Cardiac septum (tissue), 1 donor: ENCODE measurements at regions of chr2 and their contacts with region 1.

Region 1: DNA sequence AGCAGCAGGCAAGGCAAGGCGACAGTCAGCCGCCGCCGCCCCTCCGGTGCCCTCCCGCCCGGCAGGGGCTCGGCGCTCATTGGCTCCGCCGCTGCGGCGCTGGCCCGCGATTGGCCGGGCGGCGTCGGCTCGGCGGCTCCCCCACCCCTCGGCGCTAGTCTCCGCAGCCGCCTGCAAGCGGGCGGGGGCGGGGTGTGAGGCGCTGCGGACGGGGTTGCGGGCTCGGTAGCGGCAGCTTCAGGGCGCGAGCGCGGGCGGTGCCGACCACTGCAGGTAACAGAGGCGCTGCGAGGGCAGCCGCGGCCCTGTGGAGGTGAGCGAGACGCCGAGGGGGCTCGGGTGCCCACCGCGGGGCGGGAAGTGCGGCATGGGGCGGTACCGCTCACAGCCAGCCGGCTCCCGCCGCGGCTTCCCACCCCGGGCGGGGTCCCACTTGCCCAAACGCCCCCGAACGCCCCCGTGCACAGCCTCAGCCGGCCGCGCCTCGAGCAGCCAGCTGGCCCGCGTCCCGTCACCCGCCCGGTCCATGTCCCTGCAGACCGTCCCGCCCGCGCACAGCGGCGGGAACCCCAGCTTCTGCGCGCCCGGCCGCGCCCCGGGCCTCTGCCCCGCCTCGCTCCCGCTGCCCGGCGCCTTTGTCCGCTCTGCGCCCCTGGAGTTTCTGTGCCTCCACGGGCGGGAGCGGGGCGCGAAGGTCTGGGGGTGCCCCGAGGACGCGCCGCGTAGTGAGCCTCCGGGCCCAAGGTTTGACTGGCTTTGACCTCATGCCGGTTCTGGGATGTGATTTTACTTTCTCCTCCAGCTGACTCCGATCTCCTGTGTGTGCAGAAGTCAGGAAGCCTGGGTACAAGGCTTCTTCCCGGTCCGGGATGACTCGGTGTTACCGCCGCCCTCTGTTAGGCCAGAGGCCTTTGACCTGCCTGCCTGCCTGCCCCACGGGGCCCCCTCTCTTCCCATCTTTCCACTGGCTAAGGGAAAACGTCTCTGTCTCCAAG is at the start of gene SANBR:
- DNase-seq: peak; percentile 94
- total RNA-seq, gene SANBR: 9.6 TPM

Region 2: DNA sequence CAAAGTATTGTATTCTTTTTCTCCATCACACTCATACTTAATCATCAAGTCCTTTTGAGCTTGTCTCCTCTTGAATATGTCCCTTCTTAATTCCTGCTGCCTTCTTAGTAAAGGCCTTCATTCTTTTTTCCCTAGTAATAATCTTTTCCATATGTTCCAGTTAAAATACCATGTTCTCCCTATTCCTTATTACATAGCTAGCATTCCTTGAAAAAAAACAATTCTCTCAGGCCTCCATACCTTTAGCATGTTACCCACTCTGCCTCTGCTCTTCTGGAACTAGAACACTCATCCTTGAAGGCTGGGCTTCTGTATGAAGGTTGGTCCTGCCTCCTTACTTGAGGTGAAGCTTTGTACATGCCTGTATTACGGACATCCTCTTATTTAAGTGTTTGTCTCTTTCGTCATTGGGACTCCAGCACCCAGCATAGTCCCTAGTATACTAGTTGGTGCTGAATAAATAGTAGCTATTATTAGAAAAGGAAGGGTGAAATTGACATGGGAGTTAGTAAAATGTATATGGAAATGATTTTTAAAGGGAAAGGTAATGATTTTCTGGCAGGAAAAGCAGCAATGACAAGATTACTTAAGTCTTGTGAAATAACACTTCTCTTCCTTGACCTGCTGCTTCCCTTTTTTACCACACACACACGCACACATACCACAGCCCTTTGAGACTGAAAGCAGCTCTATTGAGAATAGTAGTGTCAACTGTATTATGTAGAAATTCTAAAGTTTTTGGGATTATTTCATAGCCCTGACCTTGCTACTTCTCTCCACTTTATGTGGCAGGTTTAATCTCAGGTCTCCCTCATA is 139.1 kb before region 1 on chr2:
- intact Hi-C with region 1: no loop called
- DNase-seq: no peak

Region 3: GRCh38 chr2:61055557-61055956 is 10.5 kb before region 1 on chr2:
- intact Hi-C with region 1: no loop called
- DNase-seq: no peak

Region 4: GRCh38 chr2:61176755-61177726 is 111.0 kb after region 1 on chr2:
- intact Hi-C with region 1: loop called (anchors 5 kb)
- DNase-seq: peak; percentile 96